ENCODE measurements at regions of chr9 and their contacts with region 1.

Region 1: DNA sequence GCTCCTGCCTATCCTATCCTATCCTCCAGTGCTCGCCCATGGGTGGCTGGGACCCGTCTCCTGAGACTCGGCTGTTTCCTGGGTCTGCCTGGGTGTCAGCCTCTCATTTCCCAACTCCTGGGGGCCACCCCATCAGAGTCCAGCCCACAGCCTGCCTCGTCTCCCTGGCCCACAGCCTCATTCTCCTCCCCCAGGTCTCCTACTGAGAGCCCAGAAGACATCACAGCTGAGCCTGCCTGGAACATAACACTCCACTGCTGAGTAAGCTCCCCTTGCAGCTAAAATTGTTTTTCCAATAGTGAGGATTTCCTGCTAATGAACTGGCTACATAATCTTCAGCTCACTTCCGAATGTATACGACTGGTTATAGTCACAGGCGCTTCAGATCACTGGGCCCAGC is 95.3 kb downstream of the TTLL11 start:
- DNase-seq: no peak
- ATAC-seq: no peak
- H3K4me3 ChIP-seq: no peak overlapping the region
- H3K27ac ChIP-seq: no peak overlapping the region
- H3K4me1 ChIP-seq: peaks cover 10% of the 10 kb centered on the region
- H3K27me3 ChIP-seq: no peaks in the 10 kb centered on the region
- CTCF ChIP-seq: no peak
- POLR2A ChIP-seq: no peak

Region 2: DNA sequence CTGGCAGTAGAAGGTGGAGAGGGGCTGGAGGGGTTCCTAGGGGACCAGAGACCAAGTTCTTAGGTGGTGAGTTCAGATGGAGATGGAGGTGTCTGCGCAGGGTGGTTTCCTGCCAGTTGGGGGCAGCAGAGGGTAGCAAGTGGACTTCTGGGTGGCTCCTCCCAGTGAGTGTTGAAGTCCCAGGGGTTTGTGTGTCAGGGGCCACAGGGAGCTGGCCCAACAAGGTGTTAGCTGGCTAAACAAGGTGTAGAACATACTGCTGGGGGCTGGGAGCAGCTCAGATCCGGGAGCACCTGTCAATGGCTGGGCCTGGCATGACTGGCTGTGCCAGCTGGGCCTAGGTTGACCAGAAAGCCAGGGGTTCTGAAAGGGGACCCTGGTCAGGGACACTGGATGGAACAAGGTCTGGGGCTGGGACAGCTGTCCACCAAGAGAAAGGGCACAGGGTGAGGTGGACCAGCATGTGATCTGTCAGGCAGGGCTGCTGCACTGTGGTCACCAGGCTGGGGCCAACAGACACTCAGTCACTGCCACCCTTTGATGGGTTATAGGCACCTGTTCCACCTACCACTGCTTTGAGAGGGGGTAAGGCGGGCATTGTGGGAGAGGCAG is 310.8 kb before region 1 on chr9:
- intact Hi-C with region 1: loop called (anchors 5 kb)
- DNase-seq: peak; percentile 76 to 86 (median 82)
- ATAC-seq: peak; percentile 81
- H3K4me3 ChIP-seq: no peak overlapping the region
- H3K27ac ChIP-seq: no peak overlapping the region
- H3K4me1 ChIP-seq: no peaks in the 10 kb centered on the region
- H3K27me3 ChIP-seq: no peaks in the 10 kb centered on the region
- CTCF ChIP-seq: peak; percentile 69 to 89 (median 75)
- POLR2A ChIP-seq: no peak

Region 3: GRCh38 chr9:121718082-121718856 is 279.5 kb before region 1 on chr9:
- intact Hi-C with region 1: no loop called
- DNase-seq: peak in 1 of 4 donors; percentile 32
- ATAC-seq: no peak
- H3K4me3 ChIP-seq: no peak overlapping the region
- H3K27ac ChIP-seq: peak overlapping the region in 1 of 4 donors; percentile 84
- H3K4me1 ChIP-seq: peaks cover 38% of the 10 kb centered on the region
- H3K27me3 ChIP-seq: no peaks in the 10 kb centered on the region
- CTCF ChIP-seq: no peak
- POLR2A ChIP-seq: no peak